PC-3 (cell line): ENCODE measurements at regions of chr11 and their contacts with region 1.

Region 1: GRCh38 chr11:17207317-17208258 is at the start of gene PIK3C2A:
- DNase-seq: peak; percentile 93
- ATAC-seq: peak; percentile 83
- H3K4me3 ChIP-seq: peak within 1 kb of the TSS; percentile 79
- H3K27ac ChIP-seq: peak within 1 kb of the TSS; percentile 76
- H3K4me1 ChIP-seq: peaks cover 16% of the 10 kb centered on the region
- H3K27me3 ChIP-seq: no peaks in the 10 kb centered on the region
- CTCF ChIP-seq: no peak
- total RNA-seq, gene PIK3C2A: 30.1 and 35.0 TPM in 2 replicates

Region 2: GRCh38 chr11:16945671-16946469 is 261.7 kb before region 1 on chr11:
- CTCF ChIA-PET with region 1: interaction called, 3 read pairs
- POLR2A ChIA-PET with region 1: no interaction called
- intact Hi-C with region 1: loop called (anchors 10 kb)
- DNase-seq: peak; percentile 78
- ATAC-seq: peak; percentile 99
- H3K4me3 ChIP-seq: no peak overlapping the region
- H3K27ac ChIP-seq: no peak overlapping the region
- H3K4me1 ChIP-seq: no peaks in the 10 kb centered on the region
- H3K27me3 ChIP-seq: no peaks in the 10 kb centered on the region
- CTCF ChIP-seq: peak; percentile 88

Region 3: GRCh38 chr11:17077520-17078401 is 129.8 kb before region 1 on chr11 and contains the start of gene RPS13:
- CTCF ChIA-PET with region 1: no interaction called
- POLR2A ChIA-PET with region 1: interaction called, 10 read pairs
- intact Hi-C with region 1: loop called (anchors 5 kb)
- DNase-seq: peak; percentile 99
- ATAC-seq: peak; percentile 95
- H3K4me3 ChIP-seq: peak within 1 kb of the TSS; percentile 79
- H3K27ac ChIP-seq: peak within 1 kb of the TSS; percentile 63
- H3K4me1 ChIP-seq: peaks cover 19% of the 10 kb centered on the region
- H3K27me3 ChIP-seq: no peaks in the 10 kb centered on the region
- CTCF ChIP-seq: no peak
- total RNA-seq, gene RPS13: 676 and 892 TPM in 2 replicates

Region 4: DNA sequence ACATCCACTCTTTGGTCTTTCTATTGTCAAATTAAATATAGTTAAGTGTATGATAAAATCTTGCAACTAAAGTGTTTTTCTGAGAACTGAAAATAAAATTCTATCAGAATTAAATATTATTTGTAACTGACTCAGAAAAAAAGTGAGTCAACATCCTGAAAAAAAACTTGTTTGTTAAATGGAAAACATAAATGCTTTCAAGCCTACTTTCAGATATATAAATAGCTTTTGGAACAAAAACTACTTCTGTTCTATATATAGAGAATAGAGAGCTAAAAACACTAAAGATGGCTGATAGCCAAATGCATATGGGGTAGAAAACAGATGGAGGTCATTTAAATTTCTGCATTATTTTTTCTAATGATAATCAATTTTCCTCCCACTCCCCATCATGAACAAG is 61.6 kb before region 1 on chr11:
- CTCF ChIA-PET with region 1: no interaction called
- POLR2A ChIA-PET with region 1: no interaction called
- intact Hi-C with region 1: loop called (anchors 5 kb)
- DNase-seq: peak; percentile 21
- ATAC-seq: peak; percentile 14; the same call in 1 of the 2 replicates
- H3K4me3 ChIP-seq: no peak overlapping the region
- H3K27ac ChIP-seq: no peak overlapping the region
- H3K4me1 ChIP-seq: peaks cover 7% of the 10 kb centered on the region
- H3K27me3 ChIP-seq: no peaks in the 10 kb centered on the region
- CTCF ChIP-seq: no peak

Region 5: DNA sequence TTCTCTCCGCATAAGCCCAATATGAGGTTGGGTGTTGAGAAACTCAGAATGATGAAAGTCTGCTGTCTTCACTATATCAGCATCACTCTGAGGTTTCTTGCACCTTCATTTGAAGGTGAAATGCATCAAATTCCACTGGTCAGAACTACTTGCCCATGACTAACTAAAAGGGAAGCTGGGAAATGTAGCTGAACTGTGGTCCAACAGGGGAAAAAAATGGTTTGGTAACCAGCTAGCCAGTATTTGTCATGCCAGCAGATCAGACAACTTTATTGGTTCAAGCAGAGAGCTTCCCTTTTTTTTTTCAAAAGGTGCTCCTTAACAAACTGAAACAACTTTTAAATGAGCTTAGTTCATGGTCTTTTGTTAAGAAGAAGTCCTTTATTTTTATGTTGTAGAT is 14.4 kb after region 1 on chr11:
- CTCF ChIA-PET with region 1: no interaction called
- POLR2A ChIA-PET with region 1: interaction called, 27 read pairs
- intact Hi-C with region 1: no loop called
- DNase-seq: peak; percentile 3
- ATAC-seq: no peak
- H3K4me3 ChIP-seq: no peak overlapping the region
- H3K27ac ChIP-seq: no peak overlapping the region
- H3K4me1 ChIP-seq: peaks cover 7% of the 10 kb centered on the region; the same call in 1 of the 2 replicates
- H3K27me3 ChIP-seq: no peaks in the 10 kb centered on the region
- CTCF ChIP-seq: no peak

Region 6: DNA sequence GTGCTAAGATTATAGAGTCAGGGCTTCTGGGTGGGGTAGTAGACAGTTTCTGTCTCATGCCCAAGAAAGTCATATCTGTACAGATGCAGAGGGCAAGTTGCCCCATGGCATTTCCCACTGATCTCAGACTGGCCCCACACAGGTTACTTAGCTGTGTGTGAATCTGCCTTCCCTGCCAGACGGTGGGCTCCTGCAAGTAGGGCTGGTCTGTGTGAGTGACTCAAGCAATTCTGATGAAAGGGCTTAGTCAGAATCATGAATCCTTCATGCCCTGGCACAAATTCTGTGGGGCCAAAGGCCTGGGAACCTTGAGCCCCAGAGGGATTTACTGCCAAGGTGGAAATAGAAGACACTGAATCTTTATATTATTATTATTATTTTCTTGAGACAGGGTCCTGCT is 306.3 kb after region 1 on chr11:
- CTCF ChIA-PET with region 1: no interaction called
- POLR2A ChIA-PET with region 1: no interaction called
- intact Hi-C with region 1: no loop called
- DNase-seq: no peak
- ATAC-seq: no peak
- H3K4me3 ChIP-seq: no peak overlapping the region
- H3K27ac ChIP-seq: no peak overlapping the region
- H3K4me1 ChIP-seq: no peaks in the 10 kb centered on the region
- H3K27me3 ChIP-seq: peaks cover 53% of the 10 kb centered on the region
- CTCF ChIP-seq: no peak